Left cardiac atrium (tissue), 4 donors: ENCODE measurements at regions of chr14 and their contacts with region 1.

Region 1: GRCh38 chr14:68734231-68734775 is 58.6 kb downstream of the ZFP36L1 start:
- DNase-seq: no peak
- ATAC-seq: no peak

Region 2: GRCh38 chr14:68616221-68616902 is 117.9 kb before region 1 on chr14:
- intact Hi-C with region 1: no loop called
- DNase-seq: no peak
- ATAC-seq: no peak

Region 3: DNA sequence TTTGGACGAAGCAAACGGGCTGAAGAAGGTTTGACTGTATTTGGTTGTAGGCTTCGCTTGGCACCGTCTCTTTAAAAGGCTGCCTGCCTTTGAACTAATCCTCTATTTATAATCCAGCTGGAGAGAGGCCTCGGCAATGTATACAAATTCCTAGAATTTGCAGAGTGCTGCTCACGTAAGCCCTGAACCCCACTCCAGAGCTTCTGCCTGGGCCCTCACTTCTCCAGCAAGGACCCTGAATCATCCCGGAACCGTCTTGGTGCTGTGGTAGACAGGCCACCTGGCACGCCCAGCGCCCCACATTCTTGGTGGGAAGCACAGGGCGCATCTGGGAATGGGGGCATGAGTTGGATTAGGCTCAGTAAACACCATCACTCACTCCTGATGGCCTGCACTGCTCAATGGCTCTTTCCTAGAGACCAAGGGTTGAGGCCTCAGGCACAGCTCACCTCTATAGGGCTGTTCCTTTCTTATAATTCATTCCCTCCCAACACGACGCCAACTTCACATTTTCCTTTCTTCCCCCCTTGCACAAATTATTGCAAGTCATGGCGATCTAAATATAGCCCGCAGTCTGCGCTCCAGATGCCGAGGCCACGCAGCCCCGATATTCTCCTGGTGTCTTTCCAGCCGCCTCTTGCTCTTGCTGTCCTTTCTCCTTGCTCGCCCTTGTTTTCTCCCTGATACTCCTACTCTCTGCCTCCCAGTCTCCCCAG is 82.5 kb before region 1 on chr14:
- intact Hi-C with region 1: no loop called
- DNase-seq: no peak
- ATAC-seq: peak; percentile 10 to 53

Region 4: DNA sequence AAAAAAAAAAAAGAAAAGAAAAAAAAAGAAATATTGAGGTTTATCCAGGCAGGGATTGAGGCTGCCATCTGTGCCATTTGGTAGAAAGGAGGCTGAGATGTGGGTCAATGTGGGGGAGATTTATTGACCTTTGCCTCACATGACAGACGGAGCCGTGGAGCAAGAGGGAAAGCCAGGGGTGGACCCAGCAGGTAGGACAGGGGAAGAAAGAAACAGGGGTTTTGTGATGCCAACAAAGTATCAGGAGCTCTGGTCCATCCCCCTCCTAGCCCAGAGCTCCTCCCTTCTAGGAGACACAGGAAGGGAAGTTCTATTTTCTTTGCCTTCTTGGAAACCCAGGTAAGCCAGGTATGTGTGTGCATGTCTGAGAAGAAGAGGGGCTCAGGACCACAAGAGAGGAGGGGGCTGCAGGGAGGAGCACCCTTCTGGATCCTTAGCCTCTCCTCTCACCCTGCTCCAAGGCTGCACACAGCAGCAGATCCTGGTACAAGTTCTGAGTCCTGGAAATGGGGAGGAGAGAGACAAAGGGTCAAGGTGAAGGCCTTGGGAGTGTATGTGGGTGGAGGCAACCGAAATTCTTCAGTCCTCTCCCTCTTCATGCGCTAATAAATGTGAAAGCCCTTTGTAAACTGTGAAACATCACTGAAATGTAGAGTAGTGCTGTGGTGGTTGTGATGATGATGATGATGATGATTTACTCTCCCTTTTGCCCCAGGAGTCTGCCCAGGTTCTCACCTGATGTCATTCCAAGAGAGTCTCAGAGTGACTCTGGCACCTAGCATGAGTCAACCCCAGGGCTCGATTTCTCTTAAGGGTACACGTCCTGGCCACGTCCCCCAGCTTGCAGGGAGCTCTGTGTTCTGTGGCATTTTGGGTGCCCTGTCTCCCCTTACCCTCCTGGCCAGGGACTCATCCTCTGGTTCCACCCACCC is 32.3 kb after region 1 on chr14:
- intact Hi-C with region 1: no loop called
- DNase-seq: no peak
- ATAC-seq: no peak

Region 5: DNA sequence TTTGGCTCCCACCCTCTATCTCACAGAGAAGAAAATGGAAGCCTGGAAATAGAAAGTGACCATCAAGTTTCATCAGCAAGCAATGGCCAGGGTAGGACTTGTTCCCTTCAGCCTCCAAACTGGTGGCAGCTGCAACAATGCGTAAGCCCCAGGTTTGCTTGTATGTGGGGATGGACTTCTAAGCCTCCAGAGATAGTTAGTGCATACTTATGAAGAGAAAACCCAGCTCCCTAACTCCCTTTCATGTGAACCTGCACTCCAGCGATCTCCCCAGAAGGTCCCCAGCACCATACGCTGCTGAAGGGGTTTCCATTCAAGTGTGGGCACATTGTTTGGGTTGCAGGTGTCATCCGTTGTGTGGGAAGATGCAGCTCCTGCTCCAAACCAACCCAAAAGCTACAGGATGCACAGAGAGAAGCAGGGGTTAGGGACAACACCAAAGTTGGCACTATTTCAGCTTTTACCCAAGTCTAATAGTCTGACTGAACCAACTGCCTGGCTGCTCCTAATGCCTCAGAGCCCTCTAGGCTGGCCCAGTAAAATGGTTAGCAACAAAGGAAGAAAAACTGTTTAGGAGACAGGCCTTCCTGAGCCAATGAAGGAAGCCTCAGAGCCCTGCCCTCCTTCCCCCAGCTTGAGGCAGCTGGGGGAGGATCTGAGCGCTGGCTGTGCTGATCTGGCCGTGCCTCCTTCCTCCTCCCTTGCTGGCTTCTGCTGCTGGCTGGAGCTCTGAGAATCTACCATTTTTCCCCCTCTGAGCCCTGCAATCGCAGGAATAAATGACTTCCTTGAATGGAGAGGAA is 46.3 kb after region 1 on chr14:
- intact Hi-C with region 1: loop called in 1 of 2 experiments (anchors 5 kb)
- DNase-seq: peak; percentile 79
- ATAC-seq: peak; percentile 78 to 83

Region 6: GRCh38 chr14:68795597-68796417 is 61.5 kb after region 1 on chr14:
- intact Hi-C with region 1: no loop called
- DNase-seq: peak; percentile 84
- ATAC-seq: peak; percentile 46 to 51